ENCODE measurements at regions of chr9 and their contacts with region 1.

Region 1: GRCh38 chr9:114487607-114488300 is 17.5 kb downstream of the WHRN start:
- DNase-seq: no peak
- ATAC-seq: peak; percentile 69 to 83 (median 80)
- H3K4me3 ChIP-seq: no peak overlapping the region
- H3K27ac ChIP-seq: no peak overlapping the region
- H3K4me1 ChIP-seq: no peaks in the 10 kb centered on the region
- H3K27me3 ChIP-seq: no peaks in the 10 kb centered on the region
- CTCF ChIP-seq: peak; percentile 62

Region 2: GRCh38 chr9:114059047-114059803 is 428.5 kb before region 1 on chr9:
- intact Hi-C with region 1: no loop called
- DNase-seq: peak in 1 of 2 donors; percentile 45
- ATAC-seq: peak in 2 of 4 donors; percentile 32 to 57
- H3K4me3 ChIP-seq: no peak overlapping the region
- H3K27ac ChIP-seq: no peak overlapping the region
- H3K4me1 ChIP-seq: peaks cover 11% of the 10 kb centered on the region
- H3K27me3 ChIP-seq: peaks cover 0 to 4% (median 0%) of the 10 kb centered on the region in 3 donors
- CTCF ChIP-seq: no peak

Region 3: GRCh38 chr9:114549697-114550330 is 62.1 kb after region 1 on chr9:
- intact Hi-C with region 1: no loop called
- DNase-seq: no peak
- ATAC-seq: no peak
- H3K4me3 ChIP-seq: no peak overlapping the region
- H3K27ac ChIP-seq: no peak overlapping the region
- H3K4me1 ChIP-seq: no peaks in the 10 kb centered on the region
- H3K27me3 ChIP-seq: peaks cover 0 to 19% (median 4%) of the 10 kb centered on the region in 3 donors
- CTCF ChIP-seq: no peak

Region 4: GRCh38 chr9:114653556-114654159 is 165.9 kb after region 1 on chr9:
- intact Hi-C with region 1: loop called (anchors 2 to 10 kb)
- DNase-seq: peak in 1 of 2 donors; percentile 54
- ATAC-seq: peak; percentile 67 to 87 (median 80)
- H3K4me3 ChIP-seq: no peak overlapping the region
- H3K27ac ChIP-seq: no peak overlapping the region
- H3K4me1 ChIP-seq: no peaks in the 10 kb centered on the region
- H3K27me3 ChIP-seq: no peaks in the 10 kb centered on the region
- CTCF ChIP-seq: peak; percentile 82